Activated CD8-positive, alpha-beta T cell treated with anti-CD3 and anti-CD28 coated beads, Interleukin-2, amount 10 ng/mL, durations not matched to agents 7 days and 5 days (primary cell): ENCODE measurements at regions of chr3 and their contacts with region 1.

Region 1: DNA sequence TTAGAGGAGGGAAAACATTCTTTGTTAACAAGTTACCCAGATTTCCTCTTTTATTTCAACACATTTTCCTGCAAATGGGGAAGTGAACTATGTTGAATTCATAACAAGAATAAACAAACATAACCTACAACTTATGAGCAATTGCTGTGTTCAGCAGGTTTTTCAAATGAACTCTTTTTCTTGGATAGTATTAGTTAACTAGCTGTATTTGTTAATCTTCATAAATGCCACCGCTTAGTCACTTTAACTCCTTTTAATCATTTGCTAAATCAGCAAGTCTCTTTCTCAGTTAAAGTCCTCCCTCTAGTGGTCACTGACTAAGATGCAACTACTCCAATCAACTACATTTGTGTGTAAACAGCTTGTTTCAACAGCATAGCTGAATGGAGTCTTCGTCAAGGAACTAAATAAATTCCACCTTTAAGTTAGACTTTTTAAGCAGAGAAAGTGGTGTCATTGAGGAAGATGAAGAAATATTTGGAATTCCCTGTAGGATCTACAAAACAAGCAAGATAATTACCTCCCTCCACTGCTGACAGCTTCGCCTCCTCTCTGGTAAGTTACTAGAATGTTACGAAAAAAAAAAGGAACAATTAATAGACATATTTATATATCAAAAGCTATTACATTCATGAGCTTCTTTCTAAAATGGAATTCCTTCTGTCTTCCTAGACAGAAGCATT is 1122.0 kb downstream of the ROBO1 start:
- DNase-seq: no peak
- ATAC-seq: no peak
- H3K4me3 Mint-ChIP-seq: no peak overlapping the region
- H3K27ac Mint-ChIP-seq: no peak overlapping the region
- H3K4me1 Mint-ChIP-seq: no peaks in the 10 kb centered on the region
- H3K27me3 Mint-ChIP-seq: no peaks in the 10 kb centered on the region

Region 2: GRCh38 chr3:78659386-78659987 is 13.7 kb after region 1 on chr3:
- CTCF ChIA-PET with region 1: interaction called, 12 read pairs
- POLR2A ChIA-PET with region 1: no interaction called
- DNase-seq: peak; percentile 52
- ATAC-seq: no peak
- H3K4me3 Mint-ChIP-seq: no peak overlapping the region
- H3K27ac Mint-ChIP-seq: no peak overlapping the region
- H3K4me1 Mint-ChIP-seq: no peaks in the 10 kb centered on the region
- H3K27me3 Mint-ChIP-seq: no peaks in the 10 kb centered on the region